Mammary epithelial cell (primary cell): ENCODE measurements at regions of chr9 and their contacts with region 1.

Region 1: DNA sequence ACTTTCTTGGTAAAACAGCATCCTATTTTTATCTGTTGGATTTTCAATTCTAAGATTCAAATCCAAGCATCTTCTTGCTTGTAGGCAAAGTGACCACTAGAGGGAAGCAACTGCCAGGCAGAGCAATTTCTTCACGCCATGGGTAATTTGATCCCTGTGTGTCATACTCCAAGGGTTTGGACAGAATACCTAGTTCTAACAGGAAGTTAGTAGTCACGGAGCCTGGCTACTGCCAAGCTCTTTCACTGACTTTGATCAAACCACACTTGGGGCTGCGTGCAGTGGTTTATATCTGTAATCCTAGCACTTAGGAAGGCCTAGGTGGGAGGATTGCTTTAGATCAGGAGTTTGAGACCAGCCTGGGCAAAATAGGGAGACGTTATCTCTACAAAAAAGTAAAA is 473.6 kb upstream of the TNC start:
- DNase-seq: peak; percentile 95
- H3K4me3 ChIP-seq: no peak overlapping the region
- H3K27ac ChIP-seq: peak overlapping the region; percentile 37
- H3K4me1 ChIP-seq: peaks cover 36% of the 10 kb centered on the region
- H3K27me3 ChIP-seq: no peaks in the 10 kb centered on the region
- CTCF ChIP-seq: peak; percentile 93 to 94

Region 2: DNA sequence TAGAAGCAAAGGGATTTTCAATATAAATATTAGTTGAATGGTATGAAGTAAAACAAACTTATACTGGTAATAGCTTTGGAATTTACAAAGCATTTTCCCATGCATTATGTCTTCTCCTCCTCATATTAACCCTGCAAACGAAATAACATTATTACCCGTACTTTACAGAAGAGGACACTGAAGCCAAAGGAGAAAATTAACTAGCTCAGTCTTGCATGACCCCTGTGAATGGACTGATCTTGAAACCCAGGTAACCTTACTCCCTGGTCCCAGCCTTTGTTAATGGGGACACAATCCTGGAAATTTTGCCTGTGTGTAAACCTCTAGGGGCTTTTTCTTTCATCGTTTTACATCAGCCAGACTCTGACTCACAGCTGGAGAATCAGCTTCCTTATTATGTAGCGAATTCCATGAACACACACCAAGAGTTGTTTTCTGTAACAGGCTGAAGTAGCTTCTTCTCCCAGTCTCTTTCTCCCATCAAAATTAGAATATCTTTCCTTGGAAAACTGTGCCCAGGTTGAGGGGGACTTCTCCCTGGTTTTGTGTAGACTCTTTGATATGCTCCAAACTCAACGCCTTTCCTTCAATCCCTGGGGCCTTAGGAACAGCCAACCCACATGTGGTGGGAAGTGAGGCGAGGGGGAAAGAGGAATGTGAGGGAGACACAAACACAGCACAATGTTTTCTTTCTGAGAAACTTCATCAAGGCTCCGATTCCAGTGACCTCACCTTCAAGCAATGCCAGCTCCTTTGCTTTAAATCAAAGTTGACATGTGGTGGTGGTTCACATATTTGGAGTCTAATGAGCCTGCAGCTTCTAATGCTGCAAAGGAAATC is 81.1 kb after region 1 on chr9:
- CTCF ChIA-PET with region 1: no interaction called
- dilution Hi-C with region 1: no loop called
- in situ Hi-C with region 1: no loop called
- intact Hi-C with region 1: loop called (anchors 1 kb)
- DNase-seq: peak; percentile 95
- H3K4me3 ChIP-seq: no peak overlapping the region
- H3K27ac ChIP-seq: peak overlapping the region; percentile 95
- H3K4me1 ChIP-seq: peaks cover 45% of the 10 kb centered on the region
- H3K27me3 ChIP-seq: no peaks in the 10 kb centered on the region
- CTCF ChIP-seq: no peak

Region 3: GRCh38 chr9:115883457-115884329 is 292.1 kb after region 1 on chr9:
- CTCF ChIA-PET with region 1: no interaction called
- dilution Hi-C with region 1: no loop called
- in situ Hi-C with region 1: loop called (anchors 10 kb)
- intact Hi-C with region 1: loop called (anchors 1 kb)
- DNase-seq: peak; percentile 66
- H3K4me3 ChIP-seq: no peak overlapping the region
- H3K27ac ChIP-seq: no peak overlapping the region
- H3K4me1 ChIP-seq: no peaks in the 10 kb centered on the region
- H3K27me3 ChIP-seq: no peaks in the 10 kb centered on the region
- CTCF ChIP-seq: peak; percentile 74 to 86

Region 4: GRCh38 chr9:116058456-116058855 is 466.9 kb after region 1 on chr9:
- CTCF ChIA-PET with region 1: no interaction called
- dilution Hi-C with region 1: no loop called
- in situ Hi-C with region 1: no loop called
- intact Hi-C with region 1: no loop called
- DNase-seq: peak; percentile 18
- H3K4me3 ChIP-seq: no peak overlapping the region
- H3K27ac ChIP-seq: no peak overlapping the region
- H3K4me1 ChIP-seq: peaks cover 9% of the 10 kb centered on the region
- H3K27me3 ChIP-seq: no peaks in the 10 kb centered on the region
- CTCF ChIP-seq: no peak

Region 5: DNA sequence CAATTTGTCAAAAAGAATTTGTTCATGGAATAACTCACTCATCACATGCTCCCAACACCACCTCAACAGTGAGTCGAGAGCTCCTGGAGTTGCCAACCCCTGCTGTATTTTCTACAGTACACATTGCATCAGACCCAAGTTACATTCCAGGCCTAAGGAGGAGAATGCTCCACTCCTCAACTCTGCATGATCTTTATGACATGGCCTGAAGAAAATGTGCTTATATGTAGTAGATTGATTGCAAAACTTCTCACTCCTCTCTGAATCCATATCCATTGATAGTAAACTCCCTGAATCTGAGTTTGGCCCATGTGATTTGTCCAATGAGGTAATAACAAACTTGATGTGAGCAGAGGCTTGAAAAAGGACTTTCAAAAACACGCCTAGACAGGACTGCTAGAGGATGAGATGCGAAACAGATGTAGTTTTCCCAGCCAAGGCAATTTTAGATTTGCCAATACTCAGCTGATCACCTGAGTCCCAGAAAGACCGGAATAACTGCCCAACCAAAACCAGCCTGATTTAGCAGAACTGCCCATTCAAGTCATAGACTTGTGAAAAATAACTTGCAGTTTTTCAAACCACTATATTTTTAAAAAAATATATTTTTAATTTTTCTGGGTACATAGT is 533.0 kb after region 1 on chr9:
- CTCF ChIA-PET with region 1: no interaction called
- dilution Hi-C with region 1: no loop called
- in situ Hi-C with region 1: loop called in 1 of 2 experiments (anchors 10 kb)
- intact Hi-C with region 1: no loop called
- DNase-seq: peak; percentile 62
- H3K4me3 ChIP-seq: no peak overlapping the region
- H3K27ac ChIP-seq: no peak overlapping the region
- H3K4me1 ChIP-seq: peaks cover 7% of the 10 kb centered on the region
- H3K27me3 ChIP-seq: no peaks in the 10 kb centered on the region
- CTCF ChIP-seq: no peak

Region 6: GRCh38 chr9:116494815-116495634 is 903.4 kb after region 1 on chr9:
- CTCF ChIA-PET with region 1: no interaction called
- dilution Hi-C with region 1: no loop called
- in situ Hi-C with region 1: no loop called
- intact Hi-C with region 1: loop called (anchors 1 kb)
- DNase-seq: no peak
- H3K4me3 ChIP-seq: no peak overlapping the region
- H3K27ac ChIP-seq: no peak overlapping the region
- H3K4me1 ChIP-seq: no peaks in the 10 kb centered on the region
- H3K27me3 ChIP-seq: no peaks in the 10 kb centered on the region
- CTCF ChIP-seq: peak; percentile 83 to 86

Region 7: GRCh38 chr9:116661037-116661954 is 1069.7 kb after region 1 on chr9:
- CTCF ChIA-PET with region 1: interaction called, 9 read pairs
- dilution Hi-C with region 1: no loop called
- in situ Hi-C with region 1: loop called (anchors 5 to 10 kb)
- intact Hi-C with region 1: loop called (anchors 1 kb)
- DNase-seq: peak; percentile 67
- H3K4me3 ChIP-seq: no peak overlapping the region
- H3K27ac ChIP-seq: peak overlapping the region; percentile 32
- H3K4me1 ChIP-seq: peaks cover 20% of the 10 kb centered on the region
- H3K27me3 ChIP-seq: no peaks in the 10 kb centered on the region
- CTCF ChIP-seq: peak; percentile 75 to 82